Endothelial cell of umbilical vein (primary cell): ENCODE measurements at regions of chr10 and their contacts with region 1.

Region 1: DNA sequence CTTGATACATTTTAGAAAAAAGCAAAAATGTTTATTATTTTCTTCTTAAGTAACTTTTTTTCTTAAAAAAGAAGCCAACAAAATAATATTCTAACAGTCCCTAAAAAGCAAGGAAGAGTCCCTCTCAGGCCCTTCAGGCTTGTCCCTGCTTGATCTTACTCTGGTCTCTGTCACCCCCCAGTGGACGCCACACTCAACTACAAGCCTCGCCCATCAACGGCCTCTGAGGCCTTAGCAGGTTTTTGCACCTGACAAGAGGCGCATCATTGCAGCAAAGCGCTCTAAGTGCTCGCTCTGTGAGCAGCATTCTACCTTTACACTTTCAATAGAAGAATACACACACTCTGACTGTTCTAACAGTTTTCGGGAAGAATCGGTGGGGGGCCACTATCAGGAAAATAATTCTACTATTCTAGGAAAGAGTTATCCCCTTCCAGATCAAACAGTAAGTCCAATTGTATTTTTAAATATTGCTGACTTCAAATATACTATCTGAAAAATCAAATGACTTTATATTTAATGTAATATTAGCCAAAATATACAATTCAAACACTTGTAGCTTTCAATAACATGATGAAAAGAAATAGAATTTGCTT is 139.2 kb downstream of the USP6NL start:
- DNase-seq: peak; percentile 40
- H3K4me3 ChIP-seq: no peak overlapping the region
- H3K27ac ChIP-seq: no peak overlapping the region
- H3K4me1 ChIP-seq: peaks cover 10% of the 10 kb centered on the region
- H3K27me3 ChIP-seq: no peaks in the 10 kb centered on the region
- CTCF ChIP-seq: peak; percentile 62 to 64
- POLR2A ChIP-seq: no peak

Region 2: DNA sequence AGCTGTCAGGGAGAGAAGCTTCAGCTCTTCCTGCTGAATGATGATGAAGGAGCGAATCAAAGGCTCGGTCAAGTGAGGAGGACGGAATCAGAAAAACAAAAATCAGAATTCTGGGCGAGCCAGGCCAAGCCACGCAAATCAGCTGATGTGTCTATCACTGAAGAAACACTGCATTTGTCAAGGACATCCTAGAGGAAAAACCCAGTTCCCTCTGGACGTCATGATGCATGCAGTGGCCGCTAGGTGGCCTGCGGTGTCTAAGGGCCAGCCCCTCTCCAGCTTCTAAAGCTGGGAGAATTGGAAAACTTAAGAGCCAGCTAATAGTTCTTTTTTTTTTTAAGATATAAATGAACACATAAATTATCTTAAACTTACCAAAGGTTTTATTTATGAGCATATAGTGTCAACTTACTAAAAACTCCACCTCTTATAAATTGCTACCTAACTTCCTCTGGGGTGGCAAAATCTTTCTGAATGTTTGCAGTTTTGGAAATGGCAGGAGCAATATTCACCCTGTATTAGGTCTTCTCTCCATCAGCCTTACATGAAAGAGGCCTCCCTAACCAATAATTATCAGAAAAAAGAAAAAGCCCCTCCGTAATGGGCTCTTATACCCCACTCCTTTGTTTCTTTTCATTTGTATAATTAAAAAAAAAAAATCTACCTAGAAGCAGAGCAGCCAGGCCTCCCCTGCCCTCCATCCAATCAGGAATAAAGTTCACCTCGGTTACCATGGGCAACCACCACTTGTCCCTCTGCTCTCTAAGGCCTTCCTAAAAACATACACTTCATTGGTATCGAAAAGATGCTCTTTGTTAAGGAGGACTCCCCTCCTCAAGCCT is 47.6 kb before region 1 on chr10:
- CTCF ChIA-PET with region 1: interaction called, 14 read pairs
- POLR2A ChIA-PET with region 1: no interaction called
- dilution Hi-C with region 1: no loop called
- intact Hi-C with region 1: loop called (anchors 1 kb)
- DNase-seq: peak; percentile 56
- H3K4me3 ChIP-seq: no peak overlapping the region
- H3K27ac ChIP-seq: no peak overlapping the region
- H3K4me1 ChIP-seq: no peaks in the 10 kb centered on the region
- H3K27me3 ChIP-seq: peaks cover 0 to 2% of the 10 kb centered on the region in 2 experiments
- CTCF ChIP-seq: peak; percentile 86 to 88
- POLR2A ChIP-seq: no peak

Region 3: GRCh38 chr10:11488126-11488525 is 15.9 kb after region 1 on chr10:
- CTCF ChIA-PET with region 1: no interaction called
- POLR2A ChIA-PET with region 1: no interaction called
- dilution Hi-C with region 1: no loop called
- intact Hi-C with region 1: no loop called
- DNase-seq: no peak
- H3K4me3 ChIP-seq: no peak overlapping the region
- H3K27ac ChIP-seq: no peak overlapping the region
- H3K4me1 ChIP-seq: no peaks in the 10 kb centered on the region
- H3K27me3 ChIP-seq: no peaks in the 10 kb centered on the region
- CTCF ChIP-seq: no peak
- POLR2A ChIP-seq: no peak